ENCODE measurements at regions of chr17 and their contacts with region 1.

Region 1: DNA sequence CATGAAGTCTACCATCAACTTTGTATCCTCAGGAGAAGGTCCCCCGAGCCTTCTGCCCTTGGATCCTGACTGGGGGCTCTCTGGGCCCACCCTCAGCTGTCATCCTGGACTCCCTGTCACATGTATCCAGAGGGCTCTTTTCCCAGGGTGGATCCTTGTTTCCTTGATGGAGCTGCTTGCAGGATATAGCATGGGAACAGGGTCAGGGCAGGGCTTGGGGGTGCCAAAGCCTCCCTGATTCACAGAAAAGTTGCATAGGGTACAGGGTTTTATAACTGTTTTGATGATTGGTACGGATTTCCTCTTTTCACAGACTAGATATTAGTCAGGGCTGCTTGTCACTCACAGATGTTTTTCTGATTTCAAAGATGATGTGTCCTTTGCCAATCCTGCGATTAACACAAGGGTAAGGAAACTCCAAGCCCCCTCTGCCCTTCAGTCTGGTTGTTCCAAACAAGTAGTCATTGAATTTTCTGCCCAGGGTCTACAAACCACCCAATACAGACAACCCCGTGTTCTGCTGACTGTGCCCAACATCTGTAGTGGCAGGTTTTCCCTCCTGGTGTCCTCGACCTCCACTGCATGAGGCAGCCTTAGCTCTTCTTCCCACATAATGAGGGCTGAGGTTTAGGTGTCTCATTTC is 20.6 kb upstream of the SLC35G3 start:
- DNase-seq: peak in 6 of 9 donors; percentile 44 to 64 (median 54)
- ATAC-seq: peak; percentile 36
- H3K4me3 ChIP-seq: peak overlapping the region; percentile 47
- H3K4me3 Mint-ChIP-seq: peak overlapping the region; percentile 69 to 91 (median 84)
- H3K27ac ChIP-seq: peak overlapping the region; percentile 76
- H3K27ac Mint-ChIP-seq: peak overlapping the region; percentile 90 to 99 (median 98)
- H3K4me1 ChIP-seq: peaks cover 75 to 85% of the 10 kb centered on the region in 2 donors
- H3K4me1 Mint-ChIP-seq: peaks cover 69 to 92% (median 87%) of the 10 kb centered on the region in 7 donors
- H3K27me3 ChIP-seq: no peaks in the 10 kb centered on the region
- H3K27me3 Mint-ChIP-seq: no peaks in the 10 kb centered on the region

Region 2: GRCh38 chr17:35161281-35161761 is 53.4 kb before region 1 on chr17:
- CTCF ChIA-PET with region 1: interaction called, 5 read pairs
- POLR2A ChIA-PET with region 1: interaction called, 81 read pairs
- intact Hi-C with region 1: loop called in 1 of 2 experiments (anchors 1 kb)
- DNase-seq: peak in 7 of 9 donors; percentile 31 to 68 (median 55)
- ATAC-seq: peak; percentile 77
- H3K4me3 ChIP-seq: peak overlapping the region; percentile 30
- H3K4me3 Mint-ChIP-seq: peak overlapping the region; percentile 41 to 83 (median 72)
- H3K27ac ChIP-seq: peak overlapping the region; percentile 75
- H3K27ac Mint-ChIP-seq: peak overlapping the region; percentile 65 to 96 (median 90)
- H3K4me1 ChIP-seq: peaks cover 40 to 52% of the 10 kb centered on the region in 2 donors
- H3K4me1 Mint-ChIP-seq: peaks cover 34 to 76% (median 70%) of the 10 kb centered on the region in 7 donors
- H3K27me3 ChIP-seq: no peaks in the 10 kb centered on the region
- H3K27me3 Mint-ChIP-seq: peaks cover 0 to 11% (median 0%) of the 10 kb centered on the region in 5 donors

Region 3: GRCh38 chr17:35183332-35183731 is 31.4 kb before region 1 on chr17:
- CTCF ChIA-PET with region 1: interaction called, 8 read pairs
- POLR2A ChIA-PET with region 1: interaction called, 55 read pairs
- intact Hi-C with region 1: loop called in 1 of 2 experiments (anchors 1 kb)
- DNase-seq: no peak
- ATAC-seq: no peak
- H3K4me3 ChIP-seq: no peak overlapping the region
- H3K4me3 Mint-ChIP-seq: no peak overlapping the region
- H3K27ac ChIP-seq: no peak overlapping the region
- H3K27ac Mint-ChIP-seq: peak overlapping the region in 3 of 9 donors; percentile 18 to 78 (median 54)
- H3K4me1 ChIP-seq: peaks cover 13 to 32% of the 10 kb centered on the region in 2 donors
- H3K4me1 Mint-ChIP-seq: peaks cover 40 to 83% (median 71%) of the 10 kb centered on the region in 7 donors
- H3K27me3 ChIP-seq: no peaks in the 10 kb centered on the region
- H3K27me3 Mint-ChIP-seq: no peaks in the 10 kb centered on the region

Region 4: GRCh38 chr17:35235917-35236316 is 21.2 kb after region 1 on chr17:
- CTCF ChIA-PET with region 1: interaction called, 52 read pairs
- POLR2A ChIA-PET with region 1: interaction called, 459 read pairs
- intact Hi-C with region 1: no loop called
- DNase-seq: peak in 1 of 9 donors; percentile 27
- ATAC-seq: peak; percentile 53
- H3K4me3 ChIP-seq: peak overlapping the region; percentile 2
- H3K4me3 Mint-ChIP-seq: peak overlapping the region in 8 of 10 donors; percentile 60 to 100 (median 88)
- H3K27ac ChIP-seq: peak overlapping the region; percentile 85
- H3K27ac Mint-ChIP-seq: peak overlapping the region in 8 of 9 donors; percentile 94 to 100 (median 98)
- H3K4me1 ChIP-seq: peaks cover 24 to 72% of the 10 kb centered on the region in 2 donors
- H3K4me1 Mint-ChIP-seq: peaks cover 40 to 91% (median 78%) of the 10 kb centered on the region in 7 donors
- H3K27me3 ChIP-seq: no peaks in the 10 kb centered on the region
- H3K27me3 Mint-ChIP-seq: no peaks in the 10 kb centered on the region

Region 5: GRCh38 chr17:35531160-35531559 is 316.4 kb after region 1 on chr17:
- CTCF ChIA-PET with region 1: interaction called, 12 read pairs
- POLR2A ChIA-PET with region 1: interaction called, 23 read pairs
- intact Hi-C with region 1: no loop called
- DNase-seq: no peak
- ATAC-seq: no peak
- H3K4me3 ChIP-seq: peak overlapping the region; percentile 28
- H3K4me3 Mint-ChIP-seq: peak overlapping the region in 8 of 10 donors; percentile 16 to 76 (median 55)
- H3K27ac ChIP-seq: peak overlapping the region; percentile 50
- H3K27ac Mint-ChIP-seq: peak overlapping the region in 8 of 9 donors; percentile 15 to 89 (median 60)
- H3K4me1 ChIP-seq: peaks cover 30 to 45% of the 10 kb centered on the region in 2 donors
- H3K4me1 Mint-ChIP-seq: peaks cover 46 to 84% (median 70%) of the 10 kb centered on the region in 7 donors
- H3K27me3 ChIP-seq: no peaks in the 10 kb centered on the region
- H3K27me3 Mint-ChIP-seq: no peaks in the 10 kb centered on the region

Region 6: GRCh38 chr17:36566081-36566480 is 1351.3 kb after region 1 on chr17:
- CTCF ChIA-PET with region 1: no interaction called
- POLR2A ChIA-PET with region 1: no interaction called
- intact Hi-C with region 1: no loop called
- DNase-seq: no peak
- ATAC-seq: no peak
- H3K4me3 ChIP-seq: no peak overlapping the region
- H3K4me3 Mint-ChIP-seq: no peak overlapping the region
- H3K27ac ChIP-seq: no peak overlapping the region
- H3K27ac Mint-ChIP-seq: peak overlapping the region in 4 of 9 donors; percentile 11 to 56 (median 21)
- H3K4me1 ChIP-seq: peaks cover 4 to 7% of the 10 kb centered on the region in 2 donors
- H3K4me1 Mint-ChIP-seq: peaks cover 12 to 37% (median 27%) of the 10 kb centered on the region in 7 donors
- H3K27me3 ChIP-seq: no peaks in the 10 kb centered on the region
- H3K27me3 Mint-ChIP-seq: no peaks in the 10 kb centered on the region

Measured in naive thymus-derived CD4-positive, alpha-beta T cell (primary cell).